T-cell (primary cell): ENCODE measurements at regions of chr11 and their contacts with region 1.

Region 1: GRCh38 chr11:44727373-44728287 is 868 bp downstream of the TSPAN18 start:
- DNase-seq: peak; percentile 26 to 89 (median 68)
- ATAC-seq: peak; percentile 72 to 77 (median 75)
- H3K4me3 ChIP-seq: peak overlapping the region; percentile 70 to 84
- H3K4me3 Mint-ChIP-seq: peak overlapping the region; percentile 84 to 86 (median 85)
- H3K27ac ChIP-seq: no peak overlapping the region
- H3K27ac Mint-ChIP-seq: peak overlapping the region; percentile 63 to 82
- H3K4me1 ChIP-seq: peaks cover 0 to 54% of the 10 kb centered on the region in 2 experiments
- H3K4me1 Mint-ChIP-seq: peaks cover 38 to 61% (median 44%) of the 10 kb centered on the region in 3 donors
- H3K27me3 ChIP-seq: peaks cover 6 to 27% of the 10 kb centered on the region in 2 experiments
- H3K27me3 Mint-ChIP-seq: peaks cover 0 to 9% of the 10 kb centered on the region in 2 donors

Region 2: DNA sequence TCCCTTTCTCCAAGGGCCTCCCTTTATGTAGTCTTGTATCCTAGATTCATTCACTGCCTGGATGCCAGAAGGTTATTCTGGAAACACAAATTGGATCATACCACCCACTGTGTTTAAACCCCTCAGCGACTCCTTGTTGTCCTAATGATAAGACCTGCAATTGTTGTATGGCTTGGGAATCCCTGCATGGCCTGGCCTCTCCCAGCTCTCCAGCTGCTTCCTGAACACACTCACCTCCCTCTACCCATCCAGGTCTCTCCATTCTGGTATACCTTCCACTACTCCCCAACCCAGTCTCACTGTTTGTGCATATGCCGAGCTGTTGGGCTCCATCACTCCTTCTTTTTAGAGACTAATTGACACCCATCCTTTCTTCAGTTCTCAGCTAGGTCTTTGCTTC is 293.4 kb before region 1 on chr11:
- CTCF ChIA-PET with region 1: no interaction called
- POLR2A ChIA-PET with region 1: no interaction called
- DNase-seq: no peak
- ATAC-seq: no peak
- H3K4me3 ChIP-seq: no peak overlapping the region
- H3K4me3 Mint-ChIP-seq: no peak overlapping the region
- H3K27ac ChIP-seq: no peak overlapping the region
- H3K27ac Mint-ChIP-seq: no peak overlapping the region
- H3K4me1 ChIP-seq: no peaks in the 10 kb centered on the region
- H3K4me1 Mint-ChIP-seq: no peaks in the 10 kb centered on the region
- H3K27me3 ChIP-seq: peaks cover 0 to 23% of the 10 kb centered on the region in 2 experiments
- H3K27me3 Mint-ChIP-seq: peaks cover 21 to 53% of the 10 kb centered on the region in 2 donors

Region 3: DNA sequence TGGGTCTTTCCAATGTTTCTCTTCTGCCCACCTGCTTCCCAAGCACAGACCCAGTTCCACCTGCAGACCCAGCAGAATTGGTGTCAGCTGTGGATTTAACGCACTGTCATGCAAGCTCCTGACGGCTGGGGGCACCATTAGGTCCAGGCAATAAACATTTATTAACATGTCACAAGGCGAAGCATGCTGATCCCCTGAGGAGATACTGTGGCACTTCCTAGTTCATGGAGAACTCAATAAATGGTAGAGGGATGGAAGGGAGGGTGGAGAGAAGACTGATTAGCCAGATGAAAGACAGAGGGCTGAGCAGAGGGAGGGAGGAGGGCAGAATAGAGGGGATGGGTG is 69.2 kb before region 1 on chr11:
- CTCF ChIA-PET with region 1: no interaction called
- POLR2A ChIA-PET with region 1: no interaction called
- DNase-seq: peak in 16 of 35 experiments; percentile 5 to 54 (median 16)
- ATAC-seq: peak in 2 of 4 experiments; percentile 42 to 47
- H3K4me3 ChIP-seq: no peak overlapping the region
- H3K4me3 Mint-ChIP-seq: no peak overlapping the region
- H3K27ac ChIP-seq: no peak overlapping the region
- H3K27ac Mint-ChIP-seq: no peak overlapping the region
- H3K4me1 ChIP-seq: peaks cover 0 to 14% of the 10 kb centered on the region in 2 experiments
- H3K4me1 Mint-ChIP-seq: peaks cover 27 to 36% (median 31%) of the 10 kb centered on the region in 3 donors
- H3K27me3 ChIP-seq: peaks cover 0 to 27% of the 10 kb centered on the region in 2 experiments
- H3K27me3 Mint-ChIP-seq: peaks cover 0 to 7% of the 10 kb centered on the region in 2 donors

Region 4: DNA sequence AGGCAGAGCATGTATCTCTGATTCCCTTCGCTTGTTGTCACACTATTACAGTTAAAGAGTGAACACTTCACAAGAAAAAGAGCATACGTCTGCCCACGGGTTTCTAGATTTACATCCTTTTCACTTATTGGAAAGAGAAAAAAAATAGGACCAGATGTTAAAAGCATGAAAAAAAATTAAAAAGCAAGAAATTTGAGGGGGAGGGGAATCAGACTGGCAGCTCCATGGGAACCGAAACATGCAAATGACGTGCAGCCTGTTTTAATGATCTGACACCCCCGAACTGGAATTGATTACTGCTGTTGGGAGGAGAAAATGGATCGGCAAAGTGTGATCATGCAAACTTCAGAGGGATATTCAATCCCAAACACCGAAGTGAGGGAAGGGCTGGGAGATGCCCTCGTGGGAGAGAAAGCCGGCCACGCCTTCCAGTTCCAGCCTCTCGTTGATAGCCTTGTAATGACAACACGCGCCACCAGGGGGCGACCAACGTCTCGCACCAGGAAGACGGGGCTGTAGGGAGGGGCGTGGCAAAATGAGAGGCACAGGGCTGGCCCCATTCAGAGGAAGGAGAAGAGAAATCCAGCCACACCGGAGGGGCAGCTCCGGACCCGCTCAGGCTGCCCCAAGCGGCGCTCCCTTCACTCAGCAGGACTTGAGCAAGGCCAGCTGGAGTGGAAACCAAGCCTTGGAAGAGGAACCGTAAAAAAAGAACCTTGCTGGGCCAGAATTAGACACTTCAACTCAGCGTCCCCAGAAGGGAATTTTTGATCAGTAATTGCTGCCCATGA is 612.3 kb after region 1 on chr11:
- CTCF ChIA-PET with region 1: interaction called in 1 of 2 experiments, 11 read pairs
- POLR2A ChIA-PET with region 1: no interaction called
- DNase-seq: peak; percentile 79 to 94 (median 88)
- ATAC-seq: peak; percentile 98 to 100 (median 99)
- H3K4me3 ChIP-seq: peak overlapping the region; percentile 11 to 16
- H3K4me3 Mint-ChIP-seq: peak overlapping the region; percentile 52 to 72 (median 72)
- H3K27ac ChIP-seq: no peak overlapping the region
- H3K27ac Mint-ChIP-seq: peak overlapping the region in 1 of 2 donors; percentile 24
- H3K4me1 ChIP-seq: peaks cover 3 to 7% of the 10 kb centered on the region in 2 experiments
- H3K4me1 Mint-ChIP-seq: peaks cover 8 to 13% (median 12%) of the 10 kb centered on the region in 3 donors
- H3K27me3 ChIP-seq: peaks cover 0 to 16% of the 10 kb centered on the region in 2 experiments
- H3K27me3 Mint-ChIP-seq: peaks cover 11 to 16% of the 10 kb centered on the region in 2 donors